ENCODE measurements at regions of chr3 and their contacts with region 1.

Region 1: GRCh38 chr3:170274641-170275040 is 52.4 kb downstream of the PRKCI start:
- DNase-seq: no peak
- H3K4me3 ChIP-seq: no peak overlapping the region
- CTCF ChIP-seq: no peak

Region 2: DNA sequence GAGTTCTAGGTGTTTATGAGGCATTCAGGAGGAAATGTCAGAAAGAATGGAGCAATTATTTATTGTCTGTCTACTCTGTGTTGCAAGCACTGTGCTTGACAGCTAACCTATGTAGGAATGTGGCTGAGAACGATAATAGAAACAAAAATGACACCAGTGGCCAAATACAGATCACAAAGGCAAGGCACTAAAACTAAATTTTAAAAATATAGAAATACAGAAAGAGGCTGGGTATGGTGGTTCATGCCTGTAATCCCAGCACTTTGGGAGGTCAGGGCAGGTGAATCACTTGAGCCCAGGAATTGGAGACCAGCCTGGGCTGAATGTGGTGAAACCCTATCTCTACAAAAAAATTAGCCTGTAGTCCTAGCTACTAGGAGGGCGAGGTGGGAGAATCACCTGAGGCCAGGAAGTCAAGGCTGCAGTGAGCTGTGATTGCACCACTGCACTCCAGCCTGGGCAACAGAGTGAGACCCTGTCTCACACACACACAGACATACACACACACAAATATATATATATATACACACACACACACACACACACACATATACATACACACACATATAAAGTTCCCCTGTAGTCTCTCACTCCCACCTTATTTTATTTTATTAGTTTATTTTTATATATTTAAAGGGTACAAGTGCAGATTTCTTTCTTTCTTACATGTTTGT is 46.4 kb before region 1 on chr3:
- in situ Hi-C with region 1: loop called (anchors 5 kb)
- DNase-seq: no peak
- H3K4me3 ChIP-seq: no peak overlapping the region
- CTCF ChIP-seq: no peak